ENCODE measurements at regions of chr6 and their contacts with region 1.

Region 1: GRCh38 chr6:100105919-100106529 is 112.0 kb upstream of the MCHR2 start:
- DNase-seq: no peak
- ATAC-seq: no peak
- H3K4me3 Mint-ChIP-seq: no peak overlapping the region
- H3K27ac Mint-ChIP-seq: no peak overlapping the region
- H3K4me1 Mint-ChIP-seq: no peaks in the 10 kb centered on the region
- H3K27me3 Mint-ChIP-seq: peaks cover 65% of the 10 kb centered on the region

Region 2: DNA sequence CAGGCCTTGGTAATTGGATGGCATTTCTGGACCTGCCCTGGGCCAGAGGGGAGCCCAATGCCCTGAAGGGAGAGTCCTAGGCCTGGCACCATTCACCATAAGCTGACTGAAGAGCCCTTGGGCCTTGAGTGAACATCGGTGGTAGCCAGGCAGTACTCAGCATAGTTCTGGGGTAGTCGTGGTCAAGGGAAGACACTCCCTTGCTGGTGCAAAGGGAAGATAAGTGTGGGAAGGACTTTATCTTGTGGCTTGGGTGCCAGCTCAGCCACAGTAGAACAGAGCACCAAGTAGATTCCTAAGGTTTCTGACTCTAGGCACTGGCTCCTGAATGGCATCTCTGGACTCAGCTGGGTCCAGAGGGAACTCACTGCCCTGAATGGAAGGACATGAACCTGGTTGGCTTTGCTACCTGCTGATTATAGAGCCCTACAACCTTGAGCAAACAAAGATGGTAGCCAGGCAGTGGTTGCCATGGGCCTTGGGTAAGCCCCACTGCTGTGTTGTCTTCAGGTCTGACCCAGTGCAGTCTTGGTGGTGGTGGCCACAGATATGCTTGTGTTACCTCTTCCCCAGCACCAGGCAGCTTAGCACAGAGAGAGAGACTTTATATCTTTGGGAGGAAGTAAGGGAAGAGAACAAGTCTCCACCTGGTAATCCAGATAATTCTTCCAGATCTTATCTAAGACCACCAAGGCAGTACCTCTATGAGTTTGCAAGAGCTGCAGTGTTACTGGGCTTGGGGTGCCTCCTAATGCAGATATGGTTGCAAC is 415.9 kb before region 1 on chr6:
- CTCF ChIA-PET with region 1: no interaction called
- DNase-seq: no peak
- ATAC-seq: no peak
- H3K4me3 Mint-ChIP-seq: no peak overlapping the region
- H3K27ac Mint-ChIP-seq: no peak overlapping the region
- H3K4me1 Mint-ChIP-seq: no peaks in the 10 kb centered on the region
- H3K27me3 Mint-ChIP-seq: peaks cover 13% of the 10 kb centered on the region

Region 3: GRCh38 chr6:100116411-100117194 is 10.6 kb after region 1 on chr6:
- CTCF ChIA-PET with region 1: interaction called, 14 read pairs
- DNase-seq: peak; percentile 66
- ATAC-seq: peak; percentile 65
- H3K4me3 Mint-ChIP-seq: no peak overlapping the region
- H3K27ac Mint-ChIP-seq: no peak overlapping the region
- H3K4me1 Mint-ChIP-seq: peaks cover 19% of the 10 kb centered on the region
- H3K27me3 Mint-ChIP-seq: peaks cover 29% of the 10 kb centered on the region